IMR-90 (cell line): ENCODE measurements at regions of chr2 and their contacts with region 1.

Region 1: DNA sequence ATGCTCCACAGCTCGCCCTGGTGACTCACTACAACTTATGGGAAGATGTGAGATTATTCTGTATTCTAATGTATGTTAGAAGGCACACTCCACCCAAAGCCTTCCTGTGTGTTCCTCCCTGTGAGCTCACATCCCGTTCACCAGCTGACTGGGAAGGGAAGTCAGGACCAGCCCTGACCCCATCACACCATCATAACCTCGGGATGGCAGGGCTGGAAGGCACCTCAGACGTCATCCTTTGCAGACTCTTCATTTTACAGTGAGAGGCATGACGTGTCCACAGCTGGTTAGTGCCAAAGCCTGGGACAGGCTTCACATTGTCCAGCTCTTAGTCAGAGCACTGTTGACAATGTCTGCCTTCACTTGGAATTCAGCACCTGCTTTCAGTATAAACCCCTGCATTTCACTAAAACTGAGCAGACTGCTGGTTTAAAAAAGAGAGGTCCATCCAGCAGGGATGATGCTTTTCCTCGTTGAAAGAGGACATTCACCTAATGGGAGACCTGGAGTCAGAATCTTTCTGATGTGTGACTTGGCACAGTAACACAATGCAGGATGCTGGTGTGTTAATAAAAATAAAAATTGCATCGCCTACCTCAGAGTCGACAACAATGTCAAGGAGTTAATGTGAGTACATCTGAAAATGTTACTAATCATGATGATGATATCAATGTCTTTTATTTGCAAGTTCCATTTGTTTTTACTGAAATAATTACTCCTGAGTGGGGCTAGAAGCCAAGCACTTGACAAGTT is 418.0 kb upstream of the TNP1 start:
- DNase-seq: peak; percentile 100
- ATAC-seq: peak; percentile 77
- H3K4me3 ChIP-seq: peak overlapping the region; percentile 22; the same call in 1 of the 2 replicates
- H3K27ac ChIP-seq: peak overlapping the region; percentile 91
- H3K4me1 ChIP-seq: peaks cover 13% of the 10 kb centered on the region
- H3K27me3 ChIP-seq: no peaks in the 10 kb centered on the region
- CTCF ChIP-seq: no peak
- POLR2A ChIP-seq: peak; percentile 50; the same call in 1 of the 2 replicates
- RAD21 ChIP-seq: peak; percentile 20; the same call in 1 of the 2 replicates

Region 2: DNA sequence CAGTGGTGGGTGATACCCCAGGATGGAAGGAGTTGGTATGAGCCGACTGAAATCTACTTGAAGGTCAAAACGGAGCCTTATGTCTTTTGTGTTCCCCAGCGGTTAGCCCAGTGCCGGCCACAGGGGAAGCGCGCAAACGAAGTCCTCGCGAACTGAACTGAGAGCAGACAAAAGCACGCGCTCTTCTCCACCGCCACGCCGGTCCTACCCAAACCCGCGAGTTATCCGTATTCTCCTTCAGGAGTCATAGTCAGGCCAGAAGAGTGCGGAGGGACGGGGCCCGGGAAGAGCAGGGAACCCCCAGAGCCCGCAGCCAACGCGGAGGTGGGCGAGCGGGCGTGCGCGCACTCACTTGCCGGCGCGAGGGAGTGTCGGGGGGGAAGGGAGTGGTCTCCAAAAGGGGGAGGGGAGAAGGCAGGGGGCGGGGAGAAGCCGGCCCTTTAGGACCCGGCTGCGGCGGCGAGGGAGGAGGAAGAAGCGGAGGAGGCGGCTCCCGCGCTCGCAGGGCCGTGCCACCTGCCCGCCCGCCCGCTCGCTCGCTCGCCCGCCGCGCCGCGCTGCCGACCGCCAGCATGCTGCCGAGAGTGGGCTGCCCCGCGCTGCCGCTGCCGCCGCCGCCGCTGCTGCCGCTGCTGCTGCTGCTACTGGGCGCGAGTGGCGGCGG is 644.7 kb before region 1 on chr2 and contains the start of gene IGFBP2:
- CTCF ChIA-PET with region 1: no interaction called
- POLR2A ChIA-PET with region 1: no interaction called
- dilution Hi-C with region 1: no loop called
- in situ Hi-C with region 1: no loop called
- intact Hi-C with region 1: no loop called
- DNase-seq: peak; percentile 40
- ATAC-seq: peak; percentile 70
- H3K4me3 ChIP-seq: peak within 1 kb of the TSS; percentile 48
- H3K27ac ChIP-seq: no peak within 1 kb of the TSS; the same call in 1 of the 2 replicates
- H3K4me1 ChIP-seq: peaks cover 4% of the 10 kb centered on the region; the same call in 1 of the 2 replicates
- H3K27me3 ChIP-seq: peaks cover 37% of the 10 kb centered on the region
- CTCF ChIP-seq: no peak
- POLR2A ChIP-seq: no peak
- RAD21 ChIP-seq: no peak
- total RNA-seq, gene IGFBP2: 33.5 and 36.7 TPM in 2 replicates

Region 3: DNA sequence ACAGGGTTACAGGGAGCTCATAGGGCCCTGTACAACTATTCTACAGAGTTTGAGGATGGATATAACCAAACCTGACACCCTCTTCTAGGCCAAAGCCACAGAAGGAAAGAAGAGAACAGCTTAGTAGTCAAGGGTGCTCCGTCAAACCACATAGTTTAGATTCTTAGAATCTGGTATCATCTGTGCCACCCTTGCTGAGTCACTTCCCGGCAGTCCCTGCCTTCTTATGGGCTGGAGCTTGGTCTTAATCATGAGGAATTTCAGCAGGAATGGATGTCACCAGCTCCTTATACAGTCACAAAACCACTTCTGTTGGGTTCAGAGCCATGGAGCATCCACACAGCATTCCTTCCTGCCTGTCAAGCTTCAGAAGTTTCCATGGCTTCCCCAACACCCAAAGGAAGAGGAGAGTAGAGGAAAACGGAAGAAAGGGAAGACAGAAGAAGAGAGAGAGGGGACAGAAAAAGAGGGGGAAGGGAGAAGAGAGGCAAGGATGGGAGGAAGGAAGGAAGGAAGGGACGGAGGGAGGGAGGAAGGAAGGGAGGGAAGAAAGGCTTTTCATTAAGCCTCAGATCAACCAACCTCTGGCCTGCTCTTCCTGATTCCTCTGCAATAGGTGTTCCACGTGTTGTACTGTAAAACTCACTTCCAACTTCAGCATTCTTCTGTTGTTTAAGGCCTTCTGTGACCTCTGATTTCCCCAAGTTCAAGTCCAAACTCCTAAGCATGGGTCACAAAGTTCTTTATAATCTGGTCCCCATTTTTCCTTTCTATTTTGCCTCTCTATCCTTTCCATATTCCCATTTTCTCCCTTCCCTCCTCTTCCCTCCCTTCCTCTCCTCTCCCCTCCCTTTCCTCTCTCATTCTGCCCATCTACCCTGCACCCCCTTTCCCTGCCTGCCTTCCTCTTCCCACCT is 171.8 kb before region 1 on chr2:
- CTCF ChIA-PET with region 1: no interaction called
- POLR2A ChIA-PET with region 1: no interaction called
- dilution Hi-C with region 1: no loop called
- in situ Hi-C with region 1: no loop called
- intact Hi-C with region 1: loop called (anchors 5 kb)
- DNase-seq: peak; percentile 95
- ATAC-seq: peak; percentile 86
- H3K4me3 ChIP-seq: no peak overlapping the region
- H3K27ac ChIP-seq: peak overlapping the region; percentile 99
- H3K4me1 ChIP-seq: peaks cover 23% of the 10 kb centered on the region
- H3K27me3 ChIP-seq: no peaks in the 10 kb centered on the region
- CTCF ChIP-seq: no peak
- POLR2A ChIP-seq: peak; percentile 68; the same call in 1 of the 2 replicates
- RAD21 ChIP-seq: peak; percentile 11; the same call in 1 of the 2 replicates

Region 4: DNA sequence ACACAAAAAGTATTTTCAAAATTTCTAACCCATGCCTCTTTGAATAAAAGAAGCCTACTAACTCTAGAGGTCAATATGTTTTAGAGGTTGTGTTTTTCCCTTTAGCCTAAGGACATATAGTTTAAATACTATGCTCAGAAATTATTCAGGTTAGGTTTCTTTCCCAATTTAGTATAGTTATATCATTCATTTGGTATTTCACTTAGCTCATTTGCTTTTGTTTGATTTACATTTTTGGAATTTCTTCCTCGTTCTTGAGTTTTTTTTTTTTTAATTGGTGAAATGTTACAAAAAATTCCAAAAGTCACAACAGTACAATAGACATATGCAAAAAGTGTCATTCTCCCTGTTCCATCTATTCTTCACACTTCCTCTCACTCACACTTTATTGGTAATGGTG is 46.6 kb before region 1 on chr2:
- CTCF ChIA-PET with region 1: no interaction called
- POLR2A ChIA-PET with region 1: interaction called, 3 read pairs
- dilution Hi-C with region 1: no loop called
- in situ Hi-C with region 1: no loop called
- intact Hi-C with region 1: loop called (anchors 2 kb)
- DNase-seq: peak; percentile 63
- ATAC-seq: peak; percentile 63
- H3K4me3 ChIP-seq: no peak overlapping the region
- H3K27ac ChIP-seq: peak overlapping the region; percentile 93
- H3K4me1 ChIP-seq: peaks cover 12% of the 10 kb centered on the region
- H3K27me3 ChIP-seq: no peaks in the 10 kb centered on the region
- CTCF ChIP-seq: no peak
- POLR2A ChIP-seq: no peak
- RAD21 ChIP-seq: no peak

Region 5: GRCh38 chr2:217338306-217338916 is 60.6 kb after region 1 on chr2:
- CTCF ChIA-PET with region 1: no interaction called
- POLR2A ChIA-PET with region 1: no interaction called
- dilution Hi-C with region 1: no loop called
- in situ Hi-C with region 1: no loop called
- intact Hi-C with region 1: loop called (anchors 2 kb)
- DNase-seq: peak; percentile 96
- ATAC-seq: peak; percentile 73
- H3K4me3 ChIP-seq: no peak overlapping the region
- H3K27ac ChIP-seq: peak overlapping the region; percentile 100
- H3K4me1 ChIP-seq: peaks cover 12% of the 10 kb centered on the region
- H3K27me3 ChIP-seq: no peaks in the 10 kb centered on the region
- CTCF ChIP-seq: no peak
- POLR2A ChIP-seq: no peak
- RAD21 ChIP-seq: no peak

Region 6: DNA sequence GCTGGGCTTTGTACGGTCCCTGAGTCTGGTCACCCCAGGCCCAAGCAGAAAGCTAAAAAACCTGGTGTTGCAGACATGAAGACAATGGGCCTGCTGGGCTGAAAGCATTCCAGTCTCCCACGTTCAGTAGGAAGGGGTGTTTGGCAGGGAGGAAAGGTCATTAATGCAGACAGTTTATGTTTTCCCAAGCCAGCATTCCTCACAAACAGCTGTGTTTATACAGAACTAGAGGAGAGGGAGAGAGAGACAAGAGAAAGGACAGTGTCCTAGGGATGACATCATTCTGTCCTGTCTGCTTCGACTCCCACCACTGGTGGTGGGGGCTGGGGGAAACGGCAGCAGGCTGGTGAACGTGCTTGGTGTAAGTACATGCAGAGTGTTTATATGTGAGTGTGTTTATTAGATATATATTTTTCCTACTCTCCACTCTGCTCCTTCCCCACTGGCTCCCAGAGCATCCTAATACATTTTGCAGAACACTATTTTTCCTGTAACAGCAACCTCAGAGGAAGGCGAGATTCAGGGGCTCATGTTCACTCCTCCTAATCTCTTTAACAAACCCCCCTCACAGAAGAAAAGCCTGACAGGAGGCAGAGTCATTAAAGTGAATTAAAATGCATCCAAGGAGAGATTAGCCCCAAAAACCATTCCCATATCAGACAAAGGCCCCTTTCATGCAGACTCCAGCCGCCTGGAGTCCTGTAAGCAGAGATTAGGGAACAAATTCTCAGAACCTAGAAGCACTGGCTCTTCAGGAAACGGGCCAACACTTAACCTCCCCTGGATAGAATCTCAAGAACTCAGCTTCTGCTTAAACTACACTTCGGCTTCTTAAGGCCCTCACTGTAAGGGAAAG is 344.6 kb after region 1 on chr2:
- CTCF ChIA-PET with region 1: no interaction called
- POLR2A ChIA-PET with region 1: no interaction called
- dilution Hi-C with region 1: no loop called
- in situ Hi-C with region 1: no loop called
- intact Hi-C with region 1: loop called (anchors 5 kb)
- DNase-seq: peak; percentile 98
- ATAC-seq: peak; percentile 90
- H3K4me3 ChIP-seq: no peak overlapping the region
- H3K27ac ChIP-seq: peak overlapping the region; percentile 68
- H3K4me1 ChIP-seq: peaks cover 27% of the 10 kb centered on the region
- H3K27me3 ChIP-seq: no peaks in the 10 kb centered on the region
- CTCF ChIP-seq: no peak
- POLR2A ChIP-seq: no peak
- RAD21 ChIP-seq: no peak